CD4-positive, alpha-beta T cell (primary cell): ENCODE measurements at regions of chr4 and their contacts with region 1.

Region 1: DNA sequence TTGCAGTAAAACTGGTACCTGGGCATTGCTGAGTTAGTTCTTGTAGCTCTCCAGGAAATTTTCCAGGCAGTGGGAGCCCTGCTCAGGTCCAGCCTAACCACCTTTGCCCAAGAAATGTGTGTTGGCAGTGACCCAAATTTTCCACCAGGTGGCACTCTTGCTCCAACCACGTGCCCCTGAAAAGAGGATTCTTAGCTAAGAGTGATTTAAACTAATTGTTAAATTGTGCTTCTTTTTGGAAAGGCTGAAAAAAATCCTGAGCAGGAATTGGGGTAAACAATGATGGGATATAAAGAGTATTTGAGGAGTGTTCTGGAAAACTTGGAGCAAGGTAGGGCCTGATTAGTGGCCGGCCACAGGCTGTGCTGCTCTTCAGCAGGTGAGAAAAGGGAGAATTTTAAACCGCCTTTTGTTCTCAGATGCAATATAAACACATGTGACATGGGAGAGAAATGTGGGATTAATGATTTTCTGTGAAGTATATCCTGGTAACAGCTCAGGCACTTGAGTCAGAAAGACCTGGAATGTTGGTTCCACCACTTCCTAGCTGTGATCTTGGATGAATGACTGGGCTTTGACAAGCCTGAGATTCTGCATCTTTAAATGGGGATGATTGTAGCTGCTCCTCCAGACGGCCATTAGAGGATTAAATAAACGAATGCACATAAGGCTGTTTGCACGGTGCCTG is 219.6 kb downstream of the PTTG2 start:
- DNase-seq: peak; percentile 55 to 85 (median 72)
- ATAC-seq: peak; percentile 62
- H3K4me3 ChIP-seq: no peak overlapping the region
- H3K4me3 Mint-ChIP-seq: no peak overlapping the region
- H3K27ac ChIP-seq: no peak overlapping the region
- H3K27ac Mint-ChIP-seq: no peak overlapping the region
- H3K4me1 ChIP-seq: peaks cover 38% of the 10 kb centered on the region
- H3K4me1 Mint-ChIP-seq: peaks cover 44% of the 10 kb centered on the region
- H3K27me3 ChIP-seq: no peaks in the 10 kb centered on the region
- H3K27me3 Mint-ChIP-seq: no peaks in the 10 kb centered on the region
- CTCF ChIP-seq: peak; percentile 99

Region 2: GRCh38 chr4:38132107-38132673 is 47.6 kb before region 1 on chr4:
- CTCF ChIA-PET with region 1: interaction called, 12 read pairs
- POLR2A ChIA-PET with region 1: interaction called, 6 read pairs
- intact Hi-C with region 1: loop called in 1 of 2 experiments (anchors 5 kb)
- DNase-seq: peak; percentile 35 to 90 (median 54)
- ATAC-seq: peak; percentile 75
- H3K4me3 ChIP-seq: peak overlapping the region; percentile 6
- H3K4me3 Mint-ChIP-seq: peak overlapping the region; percentile 85
- H3K27ac ChIP-seq: peak overlapping the region; percentile 37 to 59
- H3K27ac Mint-ChIP-seq: peak overlapping the region; percentile 91
- H3K4me1 ChIP-seq: peaks cover 54% of the 10 kb centered on the region
- H3K4me1 Mint-ChIP-seq: peaks cover 53% of the 10 kb centered on the region
- H3K27me3 ChIP-seq: no peaks in the 10 kb centered on the region
- H3K27me3 Mint-ChIP-seq: no peaks in the 10 kb centered on the region
- CTCF ChIP-seq: no peak

Region 3: GRCh38 chr4:38675146-38676121 is 495.6 kb after region 1 on chr4:
- CTCF ChIA-PET with region 1: interaction called, 23 read pairs
- POLR2A ChIA-PET with region 1: interaction called, 12 read pairs
- intact Hi-C with region 1: loop called (anchors 1 kb)
- DNase-seq: peak; percentile 66 to 93 (median 80)
- ATAC-seq: peak; percentile 57
- H3K4me3 ChIP-seq: no peak overlapping the region
- H3K4me3 Mint-ChIP-seq: peak overlapping the region; percentile 85
- H3K27ac ChIP-seq: peak overlapping the region in 1 of 2 donors; percentile 51
- H3K27ac Mint-ChIP-seq: peak overlapping the region; percentile 81
- H3K4me1 ChIP-seq: peaks cover 72% of the 10 kb centered on the region
- H3K4me1 Mint-ChIP-seq: peaks cover 89% of the 10 kb centered on the region
- H3K27me3 ChIP-seq: no peaks in the 10 kb centered on the region
- H3K27me3 Mint-ChIP-seq: no peaks in the 10 kb centered on the region
- CTCF ChIP-seq: peak; percentile 96

Region 4: DNA sequence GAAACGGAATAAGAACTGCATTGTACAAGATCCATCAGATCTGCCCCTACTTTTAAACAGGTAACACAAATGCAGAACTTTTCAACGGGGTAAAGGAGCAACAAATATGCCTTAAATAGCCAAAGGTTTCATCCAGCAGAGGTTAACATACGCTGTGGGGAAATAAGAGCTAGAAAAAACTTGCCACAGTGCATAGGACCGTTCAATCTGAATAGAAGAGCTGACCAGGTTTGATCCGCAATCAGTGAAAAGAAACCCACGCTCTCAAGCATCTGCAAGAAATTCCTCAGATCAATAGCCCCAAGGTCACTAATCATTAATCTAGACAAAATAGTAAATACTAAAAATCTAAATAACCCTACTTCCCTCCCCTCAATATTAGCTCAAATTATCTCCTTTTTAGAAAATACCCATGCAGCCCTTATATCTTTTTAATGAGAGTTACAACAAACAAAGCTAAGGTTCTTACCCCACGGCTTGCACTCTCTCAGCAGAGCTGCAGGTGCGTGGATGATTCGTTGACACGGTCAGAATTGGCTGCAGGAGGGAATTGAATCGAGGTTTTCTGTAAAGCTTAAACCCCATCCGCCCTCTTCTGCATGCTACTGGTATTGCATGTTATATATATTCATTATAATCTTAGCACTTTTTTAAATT is 602.7 kb after region 1 on chr4 and contains the start of gene TLR10:
- CTCF ChIA-PET with region 1: interaction called, 6 read pairs
- POLR2A ChIA-PET with region 1: interaction called, 3 read pairs
- intact Hi-C with region 1: loop called (anchors 1 to 2 kb)
- DNase-seq: peak in 7 of 14 experiments; percentile 14 to 75 (median 60)
- ATAC-seq: peak; percentile 77
- H3K4me3 ChIP-seq: no peak within 1 kb of the TSS
- H3K4me3 Mint-ChIP-seq: no peak within 1 kb of the TSS
- H3K27ac ChIP-seq: no peak within 1 kb of the TSS
- H3K27ac Mint-ChIP-seq: no peak within 1 kb of the TSS
- H3K4me1 ChIP-seq: peaks cover 4% of the 10 kb centered on the region
- H3K4me1 Mint-ChIP-seq: peaks cover 6% of the 10 kb centered on the region
- H3K27me3 ChIP-seq: no peaks in the 10 kb centered on the region
- H3K27me3 Mint-ChIP-seq: no peaks in the 10 kb centered on the region
- CTCF ChIP-seq: peak; percentile 78
- total RNA-seq, gene TLR10: not detected